Dendritic cell treated with granulocyte-macrophage colony-stimulating factor and Interleukin-4, amounts not matched to agents 40 ng/mL and 50 ng/mL, for 4 days (primary cell): ENCODE measurements at regions of chrX and their contacts with region 1.

Region 1: DNA sequence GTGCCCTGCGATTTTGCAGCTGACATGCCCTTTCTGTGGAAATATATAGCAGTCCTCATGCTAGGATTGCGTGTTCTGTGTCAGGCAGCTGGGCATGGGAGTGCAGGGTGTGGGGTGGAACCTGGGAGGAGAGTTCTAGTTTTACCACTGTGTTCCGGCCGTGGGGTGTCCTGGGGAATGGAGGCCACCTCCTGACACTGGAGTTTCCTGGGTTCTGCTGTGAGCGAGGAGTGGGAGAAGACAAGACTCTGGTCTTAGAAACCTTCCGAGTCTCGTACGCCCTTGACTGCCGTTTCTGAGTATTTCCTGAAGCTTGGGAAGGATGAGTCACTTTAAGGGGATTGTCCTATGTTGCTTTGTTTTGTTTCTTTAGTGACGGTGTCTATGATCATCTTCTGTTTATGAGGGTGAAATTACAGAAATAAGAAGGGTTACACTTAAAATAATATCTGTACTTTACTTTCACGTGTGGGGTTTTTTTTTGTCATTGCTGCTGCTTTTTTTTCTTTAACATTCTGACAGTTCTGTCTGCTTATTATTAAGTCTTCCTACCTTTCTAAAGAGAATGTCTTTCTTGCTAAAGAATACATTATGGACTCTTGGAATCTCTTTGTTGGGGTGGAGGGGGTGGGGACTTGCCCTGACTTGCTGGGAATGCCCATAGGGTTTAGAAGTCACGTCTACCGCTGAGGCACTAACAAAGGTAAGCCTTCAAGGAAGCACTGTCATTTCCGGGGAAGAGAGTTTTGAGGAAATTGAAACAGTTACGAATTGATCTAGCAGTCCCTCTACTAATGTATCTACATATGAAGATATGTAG is 19.2 kb downstream of the CD99 start:
- H3K4me3 Mint-ChIP-seq: peak overlapping the region; percentile 72
- H3K27ac Mint-ChIP-seq: peak overlapping the region; percentile 94
- H3K4me1 Mint-ChIP-seq: peaks cover 50% of the 10 kb centered on the region
- H3K27me3 Mint-ChIP-seq: no peaks in the 10 kb centered on the region

Region 2: DNA sequence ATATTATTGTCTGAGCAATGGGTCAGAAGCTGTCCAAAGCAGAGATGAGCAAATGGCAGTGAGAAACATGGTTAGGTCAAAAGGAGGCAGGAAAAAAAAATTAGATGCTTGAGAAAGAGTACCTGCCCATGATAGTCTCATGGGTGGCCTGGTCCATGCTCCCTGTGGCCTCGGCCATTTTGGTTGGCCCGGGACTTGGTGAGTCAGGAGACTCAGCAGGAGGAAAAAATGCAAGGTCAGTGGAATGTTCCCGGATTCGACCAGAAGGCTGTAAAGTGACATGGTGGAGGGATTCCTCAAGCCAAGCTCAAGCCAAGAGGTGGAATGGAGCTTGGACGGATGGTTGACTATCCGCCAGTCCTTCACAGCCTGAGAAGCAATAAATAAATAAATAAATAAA is 858.7 kb before region 1 on chrX:
- intact Hi-C with region 1: no loop called
- H3K4me3 Mint-ChIP-seq: no peak overlapping the region
- H3K27ac Mint-ChIP-seq: no peak overlapping the region
- H3K4me1 Mint-ChIP-seq: no peaks in the 10 kb centered on the region
- H3K27me3 Mint-ChIP-seq: no peaks in the 10 kb centered on the region

Region 3: GRCh38 chrX:2614911-2615310 is 95.3 kb before region 1 on chrX:
- intact Hi-C with region 1: loop called (anchors 5 kb)
- H3K4me3 Mint-ChIP-seq: no peak overlapping the region
- H3K27ac Mint-ChIP-seq: peak overlapping the region; percentile 78
- H3K4me1 Mint-ChIP-seq: peaks cover 46% of the 10 kb centered on the region
- H3K27me3 Mint-ChIP-seq: no peaks in the 10 kb centered on the region

Region 4: GRCh38 chrX:2690856-2691542 is 19.3 kb before region 1 on chrX and contains the start of gene CD99:
- intact Hi-C with region 1: loop called (anchors 1 kb)
- H3K4me3 Mint-ChIP-seq: peak within 1 kb of the TSS; percentile 88
- H3K27ac Mint-ChIP-seq: peak within 1 kb of the TSS; percentile 85
- H3K4me1 Mint-ChIP-seq: peaks cover 41% of the 10 kb centered on the region
- H3K27me3 Mint-ChIP-seq: peaks cover 2% of the 10 kb centered on the region

Region 5: GRCh38 chrX:2928191-2928763 is 218.0 kb after region 1 on chrX:
- intact Hi-C with region 1: no loop called
- H3K4me3 Mint-ChIP-seq: peak overlapping the region; percentile 79
- H3K27ac Mint-ChIP-seq: peak overlapping the region; percentile 94
- H3K4me1 Mint-ChIP-seq: peaks cover 12% of the 10 kb centered on the region
- H3K27me3 Mint-ChIP-seq: no peaks in the 10 kb centered on the region